ENCODE measurements at regions of chr5 and their contacts with region 1.

Region 1: DNA sequence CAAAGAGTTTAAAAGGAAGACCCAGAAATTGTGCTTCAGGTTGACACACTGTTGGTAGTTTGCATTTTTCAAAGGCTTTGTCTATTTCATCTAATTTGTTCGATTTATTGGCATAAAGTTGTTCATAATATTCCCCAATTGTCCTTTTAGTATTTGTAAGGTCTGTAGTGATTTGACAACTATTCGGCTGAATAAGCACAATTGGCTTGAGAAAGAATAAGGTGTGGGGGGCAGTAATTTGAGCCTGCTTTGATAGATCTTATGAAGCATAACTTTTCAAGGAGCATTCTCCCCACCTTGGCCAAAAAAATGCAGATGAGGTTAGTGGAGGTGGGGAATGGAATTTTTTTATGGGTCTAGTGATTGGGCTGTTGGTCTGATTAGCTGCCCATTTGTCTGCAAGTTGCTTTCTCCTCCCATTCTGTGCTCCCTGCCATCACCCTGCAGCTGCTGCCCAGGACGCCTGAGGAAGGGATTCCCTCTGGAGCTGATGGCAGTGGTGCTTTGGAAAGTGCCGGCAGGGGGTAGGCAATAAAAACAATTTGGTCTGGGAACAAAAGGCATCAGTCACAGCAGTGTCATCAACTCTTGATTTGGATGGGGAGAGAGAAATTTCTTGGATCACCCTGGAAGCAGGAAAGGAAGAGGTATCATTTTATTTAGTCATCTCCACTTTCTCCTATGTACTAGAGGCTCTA is 26.6 kb downstream of the WNT8A start:
- DNase-seq: no peak
- H3K4me3 ChIP-seq: no peak overlapping the region
- H3K27ac ChIP-seq: no peak overlapping the region
- H3K27me3 ChIP-seq: peaks cover 12% of the 10 kb centered on the region
- CTCF ChIP-seq: no peak

Region 2: GRCh38 chr5:137923856-137924255 is 186.6 kb before region 1 on chr5:
- CTCF ChIA-PET with region 1: no interaction called
- POLR2A ChIA-PET with region 1: no interaction called
- DNase-seq: no peak
- H3K4me3 ChIP-seq: no peak overlapping the region
- H3K27ac ChIP-seq: no peak overlapping the region
- H3K27me3 ChIP-seq: no peaks in the 10 kb centered on the region
- CTCF ChIP-seq: peak; percentile 40

Region 3: DNA sequence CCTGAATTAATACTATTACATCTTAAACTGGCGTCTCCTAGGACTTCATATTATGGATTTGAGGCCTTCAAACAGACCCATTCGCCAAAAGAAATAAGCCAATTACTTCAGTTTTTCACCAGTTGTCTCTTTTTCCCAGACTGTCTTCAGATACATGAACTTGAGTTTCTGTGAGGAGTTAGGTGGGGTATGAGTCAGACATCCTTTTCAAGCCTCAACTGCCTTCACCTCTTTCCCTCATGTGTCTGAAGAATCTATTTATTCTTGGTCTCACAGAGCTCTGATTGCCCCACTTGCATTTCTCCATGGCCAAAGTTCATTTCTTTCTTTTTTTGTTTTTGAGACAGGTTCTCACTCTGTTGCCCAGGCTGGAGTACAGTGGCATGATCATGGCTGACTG is 14.1 kb before region 1 on chr5:
- CTCF ChIA-PET with region 1: no interaction called
- POLR2A ChIA-PET with region 1: no interaction called
- DNase-seq: no peak
- H3K4me3 ChIP-seq: no peak overlapping the region
- H3K27ac ChIP-seq: no peak overlapping the region
- H3K27me3 ChIP-seq: peaks cover 19% of the 10 kb centered on the region
- CTCF ChIP-seq: no peak

Region 4: GRCh38 chr5:138148811-138149210 is 38.4 kb after region 1 on chr5:
- CTCF ChIA-PET with region 1: no interaction called
- POLR2A ChIA-PET with region 1: no interaction called
- DNase-seq: no peak
- H3K4me3 ChIP-seq: no peak overlapping the region
- H3K27ac ChIP-seq: no peak overlapping the region
- H3K27me3 ChIP-seq: no peaks in the 10 kb centered on the region
- CTCF ChIP-seq: no peak

Region 5: DNA sequence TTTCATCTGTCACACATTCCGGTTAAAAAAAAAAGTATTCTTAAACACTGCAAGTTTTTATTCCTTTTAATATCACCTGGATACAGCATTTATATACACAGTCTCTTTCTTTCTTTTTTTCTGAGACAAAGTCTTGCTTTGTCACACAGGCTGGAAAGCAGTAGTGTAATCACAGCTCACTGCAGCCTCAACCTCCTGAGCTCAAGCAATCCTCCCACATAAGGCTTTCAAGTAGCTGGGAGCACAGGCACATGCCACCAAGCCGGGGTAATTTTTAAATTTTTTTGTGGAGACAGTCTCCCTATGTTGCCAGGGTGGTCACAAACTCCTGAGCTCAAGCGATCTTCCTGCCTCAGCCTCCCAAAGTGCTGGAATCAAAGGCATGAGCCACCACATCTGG is 82.4 kb after region 1 on chr5:
- CTCF ChIA-PET with region 1: no interaction called
- POLR2A ChIA-PET with region 1: no interaction called
- DNase-seq: no peak
- H3K4me3 ChIP-seq: no peak overlapping the region
- H3K27ac ChIP-seq: no peak overlapping the region
- H3K27me3 ChIP-seq: no peaks in the 10 kb centered on the region
- CTCF ChIP-seq: no peak

Region 6: DNA sequence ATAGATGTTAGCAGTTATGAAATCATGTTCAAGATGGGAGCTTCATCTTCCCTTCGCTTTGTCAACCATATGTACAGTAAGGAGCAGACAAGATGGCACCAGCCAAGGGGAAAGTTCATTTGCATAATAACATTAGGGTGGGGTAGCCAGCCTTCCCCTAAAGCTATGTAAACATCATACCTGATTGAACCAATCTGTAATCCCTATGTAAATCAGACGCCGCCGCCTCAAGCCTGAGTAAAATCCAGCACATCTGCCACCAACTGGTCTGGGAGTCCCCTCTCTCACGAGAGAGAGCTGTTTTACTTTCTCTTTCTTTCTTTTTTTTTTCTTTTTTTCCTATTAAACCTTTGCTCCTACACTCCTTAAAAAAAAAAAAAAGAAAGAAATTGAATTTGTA is 297.6 kb after region 1 on chr5:
- CTCF ChIA-PET with region 1: interaction called, 10 read pairs
- POLR2A ChIA-PET with region 1: no interaction called
- DNase-seq: no peak
- H3K4me3 ChIP-seq: no peak overlapping the region
- H3K27ac ChIP-seq: no peak overlapping the region
- H3K27me3 ChIP-seq: no peaks in the 10 kb centered on the region
- CTCF ChIP-seq: no peak